GM23248 (cell line): ENCODE measurements at regions of chr15 and their contacts with region 1.

Region 1: GRCh38 chr15:23014394-23015000 is 24.9 kb downstream of the TUBGCP5 start:
- DNase-seq: no peak
- H3K4me3 ChIP-seq: no peak overlapping the region
- H3K27ac ChIP-seq: no peak overlapping the region
- H3K4me1 ChIP-seq: no peaks in the 10 kb centered on the region
- H3K27me3 ChIP-seq: no peaks in the 10 kb centered on the region

Region 2: GRCh38 chr15:23073890-23074646 is 59.6 kb after region 1 on chr15:
- in situ Hi-C with region 1: loop called (anchors 10 kb)
- DNase-seq: no peak
- H3K4me3 ChIP-seq: no peak overlapping the region
- H3K27ac ChIP-seq: no peak overlapping the region
- H3K4me1 ChIP-seq: no peaks in the 10 kb centered on the region
- H3K27me3 ChIP-seq: peaks cover 11% of the 10 kb centered on the region

Region 3: GRCh38 chr15:23118203-23118602 is 103.7 kb after region 1 on chr15:
- in situ Hi-C with region 1: no loop called
- DNase-seq: no peak
- H3K4me3 ChIP-seq: no peak overlapping the region
- H3K27ac ChIP-seq: no peak overlapping the region
- H3K4me1 ChIP-seq: no peaks in the 10 kb centered on the region
- H3K27me3 ChIP-seq: no peaks in the 10 kb centered on the region